ENCODE measurements at regions of chr17 and their contacts with region 1.

Region 1: GRCh38 chr17:67212689-67213417 is 32.1 kb downstream of the HELZ start:
- DNase-seq: no peak
- CTCF ChIP-seq: no peak

Region 2: GRCh38 chr17:66985338-66986237 is 227.3 kb before region 1 on chr17:
- CTCF ChIA-PET with region 1: no interaction called
- POLR2A ChIA-PET with region 1: no interaction called
- DNase-seq: peak; percentile 57
- CTCF ChIP-seq: no peak

Region 3: DNA sequence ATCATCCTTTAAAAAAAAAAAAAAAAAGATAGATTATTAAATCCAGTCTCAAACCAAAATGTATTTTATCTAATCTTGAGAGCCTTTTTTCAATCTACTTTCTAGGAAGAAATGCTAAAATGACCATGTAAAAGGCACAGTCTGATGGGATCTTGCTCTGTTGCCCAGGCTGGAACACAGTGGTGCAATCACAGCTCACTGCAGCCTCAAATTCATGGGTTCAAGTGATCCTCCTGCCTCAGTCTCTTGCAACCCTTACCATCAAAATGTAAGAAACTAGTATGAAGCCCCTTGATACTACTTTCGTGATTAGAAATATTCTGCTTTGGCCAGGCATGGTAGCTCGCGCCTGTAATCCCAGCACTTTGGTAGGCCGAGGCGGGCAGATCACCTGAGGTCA is 38.7 kb before region 1 on chr17:
- CTCF ChIA-PET with region 1: no interaction called
- POLR2A ChIA-PET with region 1: no interaction called
- DNase-seq: no peak
- CTCF ChIP-seq: no peak

Region 4: DNA sequence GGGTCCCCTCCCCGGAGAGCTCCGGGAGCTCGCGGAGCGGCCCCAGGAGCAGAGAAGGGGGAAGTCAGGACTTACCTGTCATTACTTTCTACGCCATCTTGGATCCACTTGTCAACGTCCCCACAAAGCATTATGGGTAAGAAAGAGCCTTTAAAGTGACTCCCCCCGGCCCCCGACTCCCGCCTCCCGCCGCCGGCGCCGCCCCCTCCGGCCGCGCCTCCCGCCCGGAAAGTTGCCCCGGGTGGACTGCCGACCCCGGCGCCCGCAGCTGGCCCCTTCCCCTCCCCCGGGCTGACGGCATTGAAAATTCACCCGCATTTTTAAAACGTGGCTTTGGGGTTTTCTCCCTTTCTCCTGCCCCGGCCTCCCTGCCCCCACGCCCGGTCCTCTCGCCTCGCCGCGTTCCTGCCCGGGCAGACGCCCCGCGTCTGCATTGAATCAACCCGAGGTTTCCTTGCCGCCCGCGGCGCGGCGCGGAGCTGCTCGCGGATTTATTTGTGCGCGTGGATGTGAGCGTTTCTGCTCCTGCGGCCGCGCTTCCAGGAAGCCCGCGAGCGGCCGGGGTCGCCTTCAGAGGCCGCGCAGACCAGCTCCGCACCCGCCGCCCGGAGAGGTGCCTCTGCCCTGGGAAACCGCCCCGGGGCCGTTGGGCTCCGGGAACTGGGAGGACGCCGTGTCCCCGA is 32.4 kb after region 1 on chr17 and contains the start of gene HELZ:
- CTCF ChIA-PET with region 1: no interaction called
- POLR2A ChIA-PET with region 1: no interaction called
- DNase-seq: peak; percentile 91
- CTCF ChIP-seq: no peak

Region 5: GRCh38 chr17:67637917-67638641 is 425.2 kb after region 1 on chr17:
- CTCF ChIA-PET with region 1: no interaction called
- POLR2A ChIA-PET with region 1: interaction called, 10 read pairs
- DNase-seq: no peak
- CTCF ChIP-seq: no peak

Measured in GM10248 (cell line).